Heart left ventricle (tissue), 16 donors: ENCODE measurements at regions of chr7 and their contacts with region 1.

Region 1: DNA sequence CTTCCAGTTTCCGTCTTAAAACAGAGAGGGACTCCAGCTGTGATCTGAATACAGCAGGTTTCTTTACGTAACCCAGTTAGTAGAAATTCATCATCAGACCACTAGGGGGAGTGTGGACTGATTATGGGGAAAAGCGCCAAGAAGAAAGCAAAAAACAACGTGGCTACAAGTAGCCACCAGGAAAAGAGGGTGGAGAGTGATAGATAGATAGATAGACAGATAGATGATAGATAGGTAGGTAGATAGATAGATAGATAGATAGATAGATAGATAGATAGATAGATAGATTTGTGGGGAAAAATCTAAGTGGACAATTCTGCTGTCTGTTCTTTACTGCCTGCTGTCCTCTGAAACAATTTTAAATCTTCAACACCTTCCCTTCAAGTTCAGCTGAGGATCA is 12.7 kb upstream of the AKR1B10 start:
- DNase-seq: peak in 1 of 5 donors; percentile 18
- ATAC-seq: peak in 3 of 4 donors; percentile 16 to 58 (median 49)
- H3K4me3 ChIP-seq: no peak overlapping the region
- H3K27ac ChIP-seq: no peak overlapping the region
- H3K4me1 ChIP-seq: peaks cover 0 to 13% (median 0%) of the 10 kb centered on the region in 12 donors
- H3K27me3 ChIP-seq: no peaks in the 10 kb centered on the region
- CTCF ChIP-seq: peak; percentile 66 to 88 (median 82)
- POLR2A ChIP-seq: no peak

Region 2: DNA sequence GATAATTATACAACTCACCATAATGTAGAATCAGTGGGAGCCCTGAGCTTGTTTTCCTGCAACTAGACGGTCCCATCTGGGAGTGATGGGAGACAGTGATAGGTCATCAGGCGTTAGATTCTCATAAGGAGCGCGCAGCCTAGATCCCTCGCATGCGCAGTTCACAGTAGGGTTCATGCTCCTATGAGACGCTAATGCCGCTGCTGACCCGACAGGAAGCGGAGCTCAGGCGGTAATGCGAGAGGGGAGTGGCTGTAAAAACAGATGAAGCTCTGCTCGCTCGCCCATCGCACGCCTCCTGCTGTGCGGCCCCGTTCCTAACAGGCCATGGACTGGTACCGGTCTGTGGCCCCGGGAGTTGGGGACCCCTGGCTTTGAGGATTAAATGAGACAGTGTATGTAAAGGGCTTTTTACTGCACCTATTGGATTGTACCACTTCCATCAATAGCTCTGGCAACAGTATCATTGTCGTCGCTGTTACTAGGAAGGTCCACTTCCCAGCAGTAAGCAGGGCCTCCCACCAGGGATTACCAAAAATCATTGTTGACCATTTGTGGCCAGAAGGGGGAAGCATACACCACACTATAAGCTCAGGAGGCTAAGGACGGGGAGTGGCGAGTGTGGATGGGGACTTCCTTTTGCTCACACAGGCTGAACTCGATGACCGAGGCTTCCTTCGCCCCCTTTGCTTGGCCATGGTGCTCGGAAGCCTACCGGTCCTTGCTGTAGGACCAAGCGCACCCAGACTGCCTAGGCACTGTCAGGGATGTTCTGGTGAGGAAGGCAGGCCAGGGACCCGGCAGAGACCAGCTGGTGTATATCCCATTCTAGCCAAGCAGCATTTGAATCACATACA is 82.1 kb before region 1 on chr7:
- intact Hi-C with region 1: loop called in 9 of 10 experiments (anchors 1 to 2 kb)
- DNase-seq: peak; percentile 82 to 93 (median 91)
- ATAC-seq: peak; percentile 92 to 98 (median 98)
- H3K4me3 ChIP-seq: peak overlapping the region in 11 of 12 donors; percentile 6 to 54 (median 41)
- H3K27ac ChIP-seq: peak overlapping the region in 11 of 12 donors; percentile 51 to 86 (median 77)
- H3K4me1 ChIP-seq: peaks cover 0 to 17% (median 4%) of the 10 kb centered on the region in 12 donors
- H3K27me3 ChIP-seq: peaks cover 0 to 3% (median 0%) of the 10 kb centered on the region in 9 donors
- CTCF ChIP-seq: peak; percentile 60 to 89 (median 82)
- POLR2A ChIP-seq: peak in 1 of 2 donors; percentile 20

Region 3: DNA sequence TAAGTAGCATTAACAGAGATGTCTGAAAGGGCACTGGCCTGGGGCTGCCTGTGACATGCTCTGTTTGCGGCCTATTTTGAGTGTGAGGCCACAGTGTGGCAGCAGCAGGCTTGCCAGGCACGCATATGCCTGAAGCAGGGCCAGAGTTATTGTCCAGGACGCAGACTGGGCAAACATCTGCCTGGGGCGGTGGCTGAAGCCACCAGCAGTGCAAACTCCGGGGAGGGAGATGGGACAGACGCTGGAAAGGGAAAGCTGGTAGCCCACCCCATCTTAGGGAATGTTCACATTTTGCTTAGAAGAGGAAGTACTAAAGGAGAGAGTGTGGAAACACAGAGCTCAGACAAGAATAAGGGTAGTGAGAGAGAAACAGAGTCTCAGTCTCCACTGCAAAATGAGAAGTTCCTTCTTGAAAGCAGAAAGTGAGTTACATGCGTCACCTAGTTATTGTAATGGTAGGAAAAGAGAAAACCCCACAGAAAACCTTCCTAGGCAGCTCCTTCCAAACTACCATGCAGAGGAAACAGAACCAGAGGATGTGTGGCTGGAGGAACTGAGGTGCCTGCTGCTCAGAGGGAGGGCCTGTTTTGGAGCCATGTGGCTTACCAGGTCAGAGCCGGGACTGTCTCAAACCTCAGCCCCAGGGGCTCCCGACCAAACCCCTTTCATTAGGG is 70.3 kb before region 1 on chr7:
- intact Hi-C with region 1: loop called in 1 of 10 experiments (anchors 5 kb)
- DNase-seq: peak in 4 of 5 donors; percentile 37 to 69 (median 52)
- ATAC-seq: peak; percentile 80 to 93 (median 84)
- H3K4me3 ChIP-seq: no peak overlapping the region
- H3K27ac ChIP-seq: peak overlapping the region in 7 of 12 donors; percentile 19 to 61 (median 47)
- H3K4me1 ChIP-seq: peaks cover 0 to 30% (median 4%) of the 10 kb centered on the region in 12 donors
- H3K27me3 ChIP-seq: no peaks in the 10 kb centered on the region
- CTCF ChIP-seq: peak in 8 of 12 donors; percentile 25 to 46 (median 30)
- POLR2A ChIP-seq: no peak

Region 4: GRCh38 chr7:134565643-134566136 is 51.0 kb after region 1 on chr7:
- intact Hi-C with region 1: no loop called
- DNase-seq: no peak
- ATAC-seq: no peak
- H3K4me3 ChIP-seq: no peak overlapping the region
- H3K27ac ChIP-seq: no peak overlapping the region
- H3K4me1 ChIP-seq: no peaks in the 10 kb centered on the region
- H3K27me3 ChIP-seq: no peaks in the 10 kb centered on the region
- CTCF ChIP-seq: no peak
- POLR2A ChIP-seq: no peak